ENCODE measurements at regions of chr6 and their contacts with region 1.

Region 1: DNA sequence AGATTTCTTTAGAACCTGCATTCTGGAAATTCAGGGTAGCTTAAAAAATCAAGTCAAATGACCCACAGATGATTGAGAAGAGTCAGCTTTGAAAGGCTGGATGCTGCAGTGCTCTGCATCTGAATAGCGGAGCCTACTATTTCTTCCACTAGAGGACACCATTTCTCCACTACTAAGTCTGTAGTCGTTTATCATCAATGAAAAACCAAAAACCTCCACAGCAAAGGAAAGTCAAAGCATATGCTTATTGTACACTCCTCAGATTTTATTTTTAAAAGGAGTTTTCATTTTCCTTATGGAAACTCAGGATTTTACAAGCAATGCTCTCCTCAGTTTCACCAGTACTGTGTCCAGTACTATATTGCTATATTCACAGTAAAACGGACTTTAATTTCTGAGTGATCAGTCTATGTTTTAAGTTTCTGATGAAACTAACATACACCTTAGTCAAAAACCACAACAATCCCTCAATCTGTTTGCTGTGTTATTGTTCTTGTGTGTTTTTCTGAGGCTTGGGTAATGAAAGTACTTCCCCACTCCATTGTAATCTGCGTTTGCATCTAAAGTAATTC is 50.5 kb upstream of the ENPP5 start:
- DNase-seq: no peak
- H3K4me3 ChIP-seq: no peak overlapping the region
- H3K27ac ChIP-seq: no peak overlapping the region
- H3K4me1 ChIP-seq: peaks cover 0 to 19% (median 5%) of the 10 kb centered on the region in 4 donors
- H3K27me3 ChIP-seq: no peaks in the 10 kb centered on the region
- CTCF ChIP-seq: peak; percentile 75 to 82 (median 76)
- EP300 ChIP-seq: no peak
- POLR2A ChIP-seq: no peak

Region 2: GRCh38 chr6:46090115-46091079 is 130.9 kb before region 1 on chr6:
- intact Hi-C with region 1: loop called (anchors 5 kb)
- DNase-seq: no peak
- H3K4me3 ChIP-seq: no peak overlapping the region
- H3K27ac ChIP-seq: no peak overlapping the region
- H3K4me1 ChIP-seq: no peaks in the 10 kb centered on the region
- H3K27me3 ChIP-seq: no peaks in the 10 kb centered on the region
- CTCF ChIP-seq: peak; percentile 67 to 78 (median 76)
- EP300 ChIP-seq: no peak
- POLR2A ChIP-seq: no peak

Region 3: GRCh38 chr6:46246081-46246480 is 24.8 kb after region 1 on chr6:
- intact Hi-C with region 1: no loop called
- DNase-seq: no peak
- H3K4me3 ChIP-seq: no peak overlapping the region
- H3K27ac ChIP-seq: no peak overlapping the region
- H3K4me1 ChIP-seq: peaks cover 3 to 27% (median 6%) of the 10 kb centered on the region in 4 donors
- H3K27me3 ChIP-seq: no peaks in the 10 kb centered on the region
- CTCF ChIP-seq: no peak
- EP300 ChIP-seq: no peak
- POLR2A ChIP-seq: no peak

Region 4: GRCh38 chr6:46410334-46410953 is 189.1 kb after region 1 on chr6:
- intact Hi-C with region 1: loop called (anchors 2 kb)
- DNase-seq: no peak
- H3K4me3 ChIP-seq: no peak overlapping the region
- H3K27ac ChIP-seq: peak overlapping the region in 2 of 4 donors; percentile 22 to 37
- H3K4me1 ChIP-seq: peaks cover 33 to 47% (median 44%) of the 10 kb centered on the region in 4 donors
- H3K27me3 ChIP-seq: no peaks in the 10 kb centered on the region
- CTCF ChIP-seq: peak; percentile 83 to 86 (median 86)
- EP300 ChIP-seq: no peak
- POLR2A ChIP-seq: no peak

Region 5: GRCh38 chr6:46491628-46492547 is 270.6 kb after region 1 on chr6:
- intact Hi-C with region 1: loop called (anchors 5 kb)
- DNase-seq: no peak
- H3K4me3 ChIP-seq: peak overlapping the region; percentile 64 to 83 (median 82)
- H3K27ac ChIP-seq: peak overlapping the region; percentile 78 to 89 (median 86)
- H3K4me1 ChIP-seq: peaks cover 5 to 26% (median 19%) of the 10 kb centered on the region in 4 donors
- H3K27me3 ChIP-seq: no peaks in the 10 kb centered on the region
- CTCF ChIP-seq: peak; percentile 67 to 80 (median 70)
- EP300 ChIP-seq: no peak
- POLR2A ChIP-seq: no peak

Region 6: GRCh38 chr6:46555129-46555528 is 333.8 kb after region 1 on chr6:
- intact Hi-C with region 1: no loop called
- DNase-seq: no peak
- H3K4me3 ChIP-seq: no peak overlapping the region
- H3K27ac ChIP-seq: no peak overlapping the region
- H3K4me1 ChIP-seq: no peaks in the 10 kb centered on the region
- H3K27me3 ChIP-seq: no peaks in the 10 kb centered on the region
- CTCF ChIP-seq: no peak
- EP300 ChIP-seq: no peak
- POLR2A ChIP-seq: no peak

Region 7: DNA sequence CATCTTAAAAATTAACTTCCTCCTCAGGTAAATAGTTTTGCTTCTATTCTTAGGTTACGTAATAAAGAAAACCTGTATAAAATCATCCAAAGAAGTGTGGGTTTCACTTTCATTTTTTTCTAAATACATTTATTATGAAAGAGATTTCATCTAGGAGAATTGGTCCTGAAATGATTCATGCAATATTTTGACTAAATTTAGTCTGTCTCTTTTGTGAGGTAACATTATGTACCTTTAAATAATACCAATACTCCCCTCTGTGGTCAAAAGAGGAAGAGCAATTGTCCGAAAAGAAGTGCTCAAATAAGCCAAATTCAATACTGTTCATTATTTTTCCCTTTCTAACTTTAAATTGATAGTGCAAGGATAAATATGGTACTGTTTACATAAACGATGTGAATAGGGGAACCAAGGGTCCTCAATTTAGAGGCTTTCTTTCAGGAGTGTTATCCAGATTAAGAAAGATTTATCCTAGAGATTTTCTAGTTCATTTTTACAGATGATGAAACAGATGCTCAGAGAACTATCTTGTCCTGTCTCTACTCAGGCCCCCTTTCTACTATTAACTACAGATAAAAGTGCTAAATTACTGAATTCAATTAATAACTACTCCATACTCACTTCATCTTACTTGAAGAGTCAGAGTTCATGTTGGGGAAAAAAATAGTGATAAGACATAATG is 405.1 kb after region 1 on chr6:
- intact Hi-C with region 1: loop called (anchors 5 kb)
- DNase-seq: no peak
- H3K4me3 ChIP-seq: no peak overlapping the region
- H3K27ac ChIP-seq: no peak overlapping the region
- H3K4me1 ChIP-seq: peaks cover 0 to 9% (median 3%) of the 10 kb centered on the region in 4 donors
- H3K27me3 ChIP-seq: no peaks in the 10 kb centered on the region
- CTCF ChIP-seq: peak; percentile 60 to 73 (median 64)
- EP300 ChIP-seq: no peak
- POLR2A ChIP-seq: no peak